Endothelial cell of umbilical vein (primary cell): ENCODE measurements at regions of chr10 and their contacts with region 1.

Region 1: GRCh38 chr10:34637418-34637911 is 177.6 kb downstream of the PARD3 start:
- DNase-seq: peak; percentile 57
- H3K4me3 ChIP-seq: no peak overlapping the region
- H3K27ac ChIP-seq: no peak overlapping the region
- H3K4me1 ChIP-seq: peaks cover 4% of the 10 kb centered on the region
- H3K27me3 ChIP-seq: no peaks in the 10 kb centered on the region
- CTCF ChIP-seq: peak; percentile 91 to 95
- POLR2A ChIP-seq: no peak

Region 2: DNA sequence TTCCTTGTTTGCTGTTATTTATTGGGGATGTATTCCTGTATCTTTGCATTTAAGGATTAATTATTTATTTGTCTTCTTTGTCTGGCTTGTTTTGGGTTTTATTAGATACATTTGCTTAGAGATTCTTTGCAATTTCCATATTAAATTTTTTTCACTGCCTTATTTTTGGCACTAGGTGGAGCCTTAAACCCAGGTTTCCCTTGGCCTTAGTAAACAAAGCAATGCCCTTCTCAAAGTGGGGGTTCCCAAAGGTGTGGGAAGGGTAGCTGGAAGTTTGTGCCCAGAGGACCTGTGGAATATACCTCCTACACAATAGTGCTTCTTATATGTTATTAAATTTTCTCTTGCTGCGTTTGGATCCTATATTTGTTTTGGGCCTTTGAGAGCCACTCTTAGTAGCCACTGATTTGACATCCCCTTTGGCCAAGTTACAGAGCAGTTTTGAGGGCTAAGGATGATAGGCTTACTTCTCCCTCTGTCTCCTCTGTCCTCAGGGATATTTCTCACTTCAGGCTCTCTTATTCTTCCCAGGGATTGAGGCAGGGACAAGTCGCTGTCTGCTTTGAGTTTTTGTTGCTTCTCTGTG is 1841.8 kb before region 1 on chr10:
- CTCF ChIA-PET with region 1: no interaction called
- POLR2A ChIA-PET with region 1: no interaction called
- dilution Hi-C with region 1: no loop called
- intact Hi-C with region 1: loop called (anchors 10 kb)
- DNase-seq: peak; percentile 55
- H3K4me3 ChIP-seq: no peak overlapping the region
- H3K27ac ChIP-seq: no peak overlapping the region
- H3K4me1 ChIP-seq: no peaks in the 10 kb centered on the region
- H3K27me3 ChIP-seq: peaks cover 0 to 2% of the 10 kb centered on the region in 2 experiments
- CTCF ChIP-seq: peak; percentile 39 to 45
- POLR2A ChIP-seq: no peak

Region 3: DNA sequence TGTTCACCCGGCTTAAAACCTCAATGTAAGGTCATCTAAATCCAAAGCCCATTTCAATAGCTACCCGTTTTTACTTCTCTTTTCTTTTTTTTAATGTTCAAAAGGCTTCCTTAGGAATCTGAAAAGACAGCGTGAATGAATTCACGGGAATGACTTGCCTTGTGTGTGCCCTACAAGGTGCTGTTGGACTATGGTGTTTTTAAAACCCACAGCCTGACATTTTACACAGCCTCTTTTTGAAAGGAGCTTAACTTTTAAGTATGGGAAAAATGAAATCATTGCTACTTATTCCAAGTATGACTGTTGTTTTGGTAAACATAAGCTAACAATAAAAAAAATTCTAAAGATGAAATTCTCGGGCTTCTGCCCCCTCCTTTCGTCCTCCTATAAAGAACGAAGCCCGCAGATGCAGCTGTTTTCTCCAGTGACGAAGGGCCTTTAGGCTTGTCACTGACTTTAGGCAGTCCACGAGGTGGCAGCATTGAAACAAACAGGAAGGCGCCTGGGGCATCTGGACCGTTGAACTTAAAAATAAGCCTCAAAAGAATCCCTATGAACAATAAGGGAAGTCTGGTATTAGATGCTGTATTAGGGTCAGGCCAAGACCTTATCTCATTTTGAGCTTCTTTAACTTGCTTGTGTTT is 1444.3 kb before region 1 on chr10:
- CTCF ChIA-PET with region 1: interaction called, 18 read pairs
- POLR2A ChIA-PET with region 1: no interaction called
- dilution Hi-C with region 1: no loop called
- intact Hi-C with region 1: loop called (anchors 1 kb)
- DNase-seq: peak; percentile 86
- H3K4me3 ChIP-seq: no peak overlapping the region
- H3K27ac ChIP-seq: peak overlapping the region; percentile 59
- H3K4me1 ChIP-seq: peaks cover 50% of the 10 kb centered on the region
- H3K27me3 ChIP-seq: no peaks in the 10 kb centered on the region
- CTCF ChIP-seq: peak; percentile 72 to 75
- POLR2A ChIP-seq: peak; percentile 23

Region 4: GRCh38 chr10:34223658-34224057 is 413.8 kb before region 1 on chr10:
- CTCF ChIA-PET with region 1: interaction called, 4 read pairs
- POLR2A ChIA-PET with region 1: no interaction called
- dilution Hi-C with region 1: no loop called
- intact Hi-C with region 1: loop called (anchors 5 kb)
- DNase-seq: no peak
- H3K4me3 ChIP-seq: no peak overlapping the region
- H3K27ac ChIP-seq: no peak overlapping the region
- H3K4me1 ChIP-seq: no peaks in the 10 kb centered on the region
- H3K27me3 ChIP-seq: no peaks in the 10 kb centered on the region
- CTCF ChIP-seq: no peak
- POLR2A ChIP-seq: no peak

Region 5: GRCh38 chr10:34364253-34365037 is 273.0 kb before region 1 on chr10:
- CTCF ChIA-PET with region 1: no interaction called
- POLR2A ChIA-PET with region 1: no interaction called
- dilution Hi-C with region 1: no loop called
- intact Hi-C with region 1: no loop called
- DNase-seq: no peak
- H3K4me3 ChIP-seq: no peak overlapping the region
- H3K27ac ChIP-seq: no peak overlapping the region
- H3K4me1 ChIP-seq: no peaks in the 10 kb centered on the region
- H3K27me3 ChIP-seq: no peaks in the 10 kb centered on the region
- CTCF ChIP-seq: no peak
- POLR2A ChIP-seq: no peak

Region 6: GRCh38 chr10:34407324-34407805 is 230.1 kb before region 1 on chr10:
- CTCF ChIA-PET with region 1: no interaction called
- POLR2A ChIA-PET with region 1: no interaction called
- dilution Hi-C with region 1: no loop called
- intact Hi-C with region 1: loop called (anchors 5 kb)
- DNase-seq: peak; percentile 70
- H3K4me3 ChIP-seq: no peak overlapping the region
- H3K27ac ChIP-seq: no peak overlapping the region
- H3K4me1 ChIP-seq: peaks cover 24% of the 10 kb centered on the region
- H3K27me3 ChIP-seq: no peaks in the 10 kb centered on the region
- CTCF ChIP-seq: no peak
- POLR2A ChIP-seq: no peak

Region 7: GRCh38 chr10:34528320-34528719 is 109.1 kb before region 1 on chr10:
- CTCF ChIA-PET with region 1: interaction called, 109 read pairs
- POLR2A ChIA-PET with region 1: no interaction called
- dilution Hi-C with region 1: no loop called
- intact Hi-C with region 1: loop called (anchors 1 kb)
- DNase-seq: peak; percentile 83
- H3K4me3 ChIP-seq: no peak overlapping the region
- H3K27ac ChIP-seq: peak overlapping the region; percentile 89
- H3K4me1 ChIP-seq: peaks cover 30% of the 10 kb centered on the region
- H3K27me3 ChIP-seq: no peaks in the 10 kb centered on the region
- CTCF ChIP-seq: no peak
- POLR2A ChIP-seq: no peak

Region 8: GRCh38 chr10:35218339-35218955 is 581.0 kb after region 1 on chr10:
- CTCF ChIA-PET with region 1: no interaction called
- POLR2A ChIA-PET with region 1: no interaction called
- dilution Hi-C with region 1: no loop called
- intact Hi-C with region 1: no loop called
- DNase-seq: peak; percentile 86
- H3K4me3 ChIP-seq: no peak overlapping the region
- H3K27ac ChIP-seq: no peak overlapping the region
- H3K4me1 ChIP-seq: peaks cover 3% of the 10 kb centered on the region
- H3K27me3 ChIP-seq: no peaks in the 10 kb centered on the region
- CTCF ChIP-seq: peak; percentile 62 to 80
- POLR2A ChIP-seq: no peak